ENCODE measurements at regions of chr2 and their contacts with region 1.

Region 1: DNA sequence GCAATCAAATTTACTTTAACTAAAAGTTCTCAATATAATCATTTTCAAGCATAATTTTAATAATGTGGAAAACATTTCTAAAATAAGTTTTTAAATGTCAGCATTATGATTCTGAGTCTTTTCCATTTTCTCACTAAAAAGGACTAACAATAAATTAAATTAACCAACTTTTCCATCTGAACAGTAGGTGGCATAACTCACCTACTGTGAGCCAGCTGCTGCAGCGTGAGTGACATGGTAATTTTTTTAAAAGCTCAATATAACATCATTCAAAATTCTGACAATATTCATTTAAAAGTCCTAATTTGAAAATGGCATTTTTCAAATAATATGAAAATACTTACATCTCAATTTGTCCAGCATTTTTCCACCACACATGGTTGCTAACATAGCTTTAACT is 66.5 kb downstream of the DTNB start:
- DNase-seq: no peak
- ATAC-seq: peak; percentile 55 to 70 (median 62)
- H3K4me3 ChIP-seq: no peak overlapping the region
- H3K27ac ChIP-seq: no peak overlapping the region
- H3K4me1 ChIP-seq: peaks cover 0 to 10% (median 0%) of the 10 kb centered on the region in 4 donors
- H3K27me3 ChIP-seq: no peaks in the 10 kb centered on the region
- CTCF ChIP-seq: peak; percentile 60 to 64 (median 63)
- POLR2A ChIP-seq: no peak

Region 2: DNA sequence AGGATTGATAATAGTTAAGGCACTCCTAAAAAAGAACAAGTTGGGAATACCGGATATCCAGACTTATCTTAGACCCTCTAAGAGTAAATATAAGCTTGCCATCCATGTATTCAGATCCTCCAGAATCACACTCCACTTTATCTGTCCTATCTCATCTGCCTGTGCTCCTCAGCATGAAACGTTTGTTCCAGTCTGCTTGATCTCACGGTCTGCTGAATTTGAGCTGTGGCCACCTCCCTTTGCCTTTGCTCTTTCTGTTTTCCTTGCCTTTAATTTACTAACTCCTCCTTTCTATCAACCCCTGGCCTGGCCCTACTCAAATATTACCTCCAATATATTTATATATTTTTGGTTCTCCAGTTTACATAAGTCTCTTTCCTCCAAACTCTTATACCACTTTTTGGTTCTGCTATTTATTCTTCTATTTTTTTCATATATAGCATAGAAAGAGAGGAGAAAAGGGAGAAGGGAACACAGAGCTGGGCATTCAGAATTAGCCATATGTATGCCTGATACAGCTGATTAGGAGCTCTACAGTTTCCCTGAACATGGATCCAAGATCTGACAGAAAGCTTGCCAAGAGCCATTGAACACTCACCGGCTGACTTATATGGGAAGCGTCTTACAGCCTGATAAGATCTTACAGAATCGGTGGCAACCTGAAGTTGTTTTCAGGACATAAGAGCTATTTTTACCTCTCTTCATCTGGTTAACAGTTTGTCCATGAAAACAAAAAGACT is 613.3 kb before region 1 on chr2:
- intact Hi-C with region 1: no loop called
- DNase-seq: no peak
- ATAC-seq: no peak
- H3K4me3 ChIP-seq: no peak overlapping the region
- H3K27ac ChIP-seq: no peak overlapping the region
- H3K4me1 ChIP-seq: no peaks in the 10 kb centered on the region
- H3K27me3 ChIP-seq: no peaks in the 10 kb centered on the region
- CTCF ChIP-seq: no peak
- POLR2A ChIP-seq: no peak

Region 3: DNA sequence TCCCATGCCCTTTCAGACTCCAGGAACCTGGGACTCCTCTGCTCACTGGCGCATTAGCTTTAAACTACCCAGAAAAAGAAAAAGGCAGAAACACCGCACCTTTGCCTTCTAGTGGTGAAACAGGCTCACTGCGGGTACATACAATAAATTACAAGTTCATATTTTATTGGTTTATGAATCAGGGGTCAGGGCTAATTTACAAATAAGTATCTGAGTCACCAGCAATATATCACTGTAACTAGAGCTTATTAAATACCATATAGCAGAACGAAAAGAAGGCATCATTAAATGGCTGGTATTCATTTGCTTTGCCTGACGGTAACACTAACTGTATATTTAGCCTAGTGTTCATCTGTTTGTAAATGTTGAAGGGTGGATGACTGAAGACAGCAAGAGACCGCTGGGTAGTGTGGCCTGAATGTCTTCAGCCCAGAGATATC is 93.3 kb after region 1 on chr2:
- intact Hi-C with region 1: loop called in 1 of 2 experiments (anchors 5 kb)
- DNase-seq: no peak
- ATAC-seq: peak; percentile 76 to 81 (median 77)
- H3K4me3 ChIP-seq: no peak overlapping the region
- H3K27ac ChIP-seq: no peak overlapping the region
- H3K4me1 ChIP-seq: no peaks in the 10 kb centered on the region
- H3K27me3 ChIP-seq: no peaks in the 10 kb centered on the region
- CTCF ChIP-seq: peak; percentile 63 to 77 (median 68)
- POLR2A ChIP-seq: no peak

Region 4: DNA sequence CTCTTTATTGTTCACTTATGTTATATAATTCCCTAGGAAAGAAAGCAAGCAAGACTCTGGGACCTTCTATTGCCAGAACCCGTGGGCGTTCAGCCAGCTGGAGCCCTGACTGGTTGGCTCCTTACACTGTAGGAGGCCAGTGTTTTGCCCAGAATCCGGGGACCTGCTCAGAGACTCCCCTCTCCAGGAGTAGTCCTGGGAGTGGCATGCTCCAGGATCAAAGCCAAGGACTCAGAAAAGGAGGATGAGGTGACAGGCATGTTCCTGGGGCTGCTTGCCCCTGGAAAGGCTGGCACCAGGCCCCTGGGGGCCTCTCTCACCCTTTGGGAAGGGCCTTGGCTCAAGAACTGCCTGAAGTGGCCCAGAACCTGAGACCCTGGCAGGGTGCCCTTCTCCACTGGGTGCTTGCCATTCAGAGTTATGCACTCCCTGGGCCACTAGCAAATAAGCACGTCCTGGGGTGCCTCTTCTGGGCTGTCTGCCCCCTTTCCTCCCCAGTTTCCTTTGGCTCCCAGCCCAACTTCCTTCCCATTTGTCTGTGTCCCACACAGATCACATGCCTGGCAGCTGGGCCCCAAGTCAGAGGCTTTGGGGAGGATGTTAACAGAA is 395.0 kb after region 1 on chr2:
- intact Hi-C with region 1: no loop called
- DNase-seq: peak; percentile 64 to 84 (median 75)
- ATAC-seq: peak; percentile 19 to 65 (median 54)
- H3K4me3 ChIP-seq: no peak overlapping the region
- H3K27ac ChIP-seq: peak overlapping the region in 1 of 3 donors; percentile 1
- H3K4me1 ChIP-seq: peaks cover 0 to 26% (median 2%) of the 10 kb centered on the region in 4 donors
- H3K27me3 ChIP-seq: no peaks in the 10 kb centered on the region
- CTCF ChIP-seq: no peak
- POLR2A ChIP-seq: no peak

Region 5: DNA sequence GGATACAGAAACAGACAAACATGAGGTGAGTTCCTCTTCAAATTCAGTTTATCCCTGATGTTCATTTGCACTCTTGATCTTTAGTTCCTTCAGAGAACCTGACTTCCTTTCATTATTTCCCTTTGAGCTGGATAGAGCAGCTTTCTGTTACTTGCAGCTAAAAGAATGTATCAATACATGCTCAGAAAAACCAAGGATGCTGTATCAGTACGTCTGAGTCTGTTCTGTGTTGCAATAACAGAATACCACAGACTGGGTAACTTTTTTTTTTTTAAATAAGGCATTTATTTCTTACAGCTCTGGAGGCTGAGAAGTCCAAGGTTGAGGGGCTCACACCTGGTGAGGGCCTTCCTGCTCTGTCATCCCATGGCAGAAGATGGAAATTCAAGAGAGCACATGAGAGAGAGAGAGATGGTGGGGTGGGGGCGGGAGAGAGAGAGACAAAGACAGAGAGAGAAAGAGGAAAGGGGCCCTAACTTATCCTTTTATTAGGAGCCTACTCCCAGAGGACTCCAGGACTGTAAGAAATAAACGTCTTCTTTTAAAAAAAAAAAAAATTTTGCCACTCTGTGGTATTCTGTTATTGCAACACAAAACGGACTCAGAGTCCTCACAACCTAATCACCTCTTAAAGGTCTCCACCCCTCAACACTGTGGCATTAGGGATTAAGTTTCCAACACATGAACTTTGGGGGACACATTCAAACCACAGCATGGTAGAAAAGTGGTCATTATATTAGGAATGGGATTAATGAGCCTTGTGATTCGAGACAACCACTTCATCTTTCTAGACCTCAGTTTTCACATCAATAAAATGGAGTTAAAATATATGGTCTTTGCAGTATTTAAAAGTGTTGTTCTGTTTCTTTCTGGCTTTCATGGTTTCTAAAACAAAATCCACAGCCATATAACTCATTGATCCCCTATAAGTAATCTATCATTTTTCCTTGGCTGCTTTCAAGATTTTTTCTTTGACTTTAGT is 720.7 kb after region 1 on chr2:
- intact Hi-C with region 1: no loop called
- DNase-seq: no peak
- ATAC-seq: no peak
- H3K4me3 ChIP-seq: no peak overlapping the region
- H3K27ac ChIP-seq: no peak overlapping the region
- H3K4me1 ChIP-seq: no peaks in the 10 kb centered on the region
- H3K27me3 ChIP-seq: no peaks in the 10 kb centered on the region
- CTCF ChIP-seq: no peak
- POLR2A ChIP-seq: no peak